Activated CD8-positive, alpha-beta memory T cell treated with anti-CD3 and anti-CD28 coated beads, Interleukin-2, amount 10 ng/mL, durations not matched to agents 7 days and 5 days (primary cell): ENCODE measurements at regions of chr2 and their contacts with region 1.

Region 1: GRCh38 chr2:42169100-42169873 is at the start of gene EML4:
- DNase-seq: peak; percentile 93
- ATAC-seq: peak; percentile 88
- H3K4me3 Mint-ChIP-seq: no peak within 1 kb of the TSS
- H3K27ac Mint-ChIP-seq: no peak within 1 kb of the TSS
- H3K4me1 Mint-ChIP-seq: peaks cover 23% of the 10 kb centered on the region
- H3K27me3 Mint-ChIP-seq: no peaks in the 10 kb centered on the region
- total RNA-seq, gene EML4: 73.4 to 110 TPM

Region 2: DNA sequence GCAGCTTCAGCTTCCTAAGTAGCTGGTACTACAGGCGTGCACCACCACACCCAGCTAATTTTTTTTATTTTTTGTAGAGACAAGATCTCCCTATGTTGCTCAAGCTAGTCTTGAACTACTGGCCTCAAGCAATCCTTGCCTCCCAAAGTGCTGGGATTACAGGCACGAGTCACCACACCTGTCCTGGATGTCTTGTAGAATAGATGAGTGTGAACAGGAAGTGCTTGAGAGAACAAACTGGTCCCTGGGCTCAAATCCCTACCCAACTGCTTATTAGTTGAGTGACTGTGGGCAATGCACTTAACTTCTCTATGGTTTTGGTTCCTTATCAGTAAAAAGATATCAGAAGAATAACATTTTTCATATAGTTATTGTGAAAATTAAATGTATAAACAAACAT is 87.3 kb before region 1 on chr2:
- CTCF ChIA-PET with region 1: no interaction called
- DNase-seq: no peak
- ATAC-seq: no peak
- H3K4me3 Mint-ChIP-seq: no peak overlapping the region
- H3K27ac Mint-ChIP-seq: no peak overlapping the region
- H3K4me1 Mint-ChIP-seq: peaks cover 10% of the 10 kb centered on the region
- H3K27me3 Mint-ChIP-seq: peaks cover 28% of the 10 kb centered on the region

Region 3: DNA sequence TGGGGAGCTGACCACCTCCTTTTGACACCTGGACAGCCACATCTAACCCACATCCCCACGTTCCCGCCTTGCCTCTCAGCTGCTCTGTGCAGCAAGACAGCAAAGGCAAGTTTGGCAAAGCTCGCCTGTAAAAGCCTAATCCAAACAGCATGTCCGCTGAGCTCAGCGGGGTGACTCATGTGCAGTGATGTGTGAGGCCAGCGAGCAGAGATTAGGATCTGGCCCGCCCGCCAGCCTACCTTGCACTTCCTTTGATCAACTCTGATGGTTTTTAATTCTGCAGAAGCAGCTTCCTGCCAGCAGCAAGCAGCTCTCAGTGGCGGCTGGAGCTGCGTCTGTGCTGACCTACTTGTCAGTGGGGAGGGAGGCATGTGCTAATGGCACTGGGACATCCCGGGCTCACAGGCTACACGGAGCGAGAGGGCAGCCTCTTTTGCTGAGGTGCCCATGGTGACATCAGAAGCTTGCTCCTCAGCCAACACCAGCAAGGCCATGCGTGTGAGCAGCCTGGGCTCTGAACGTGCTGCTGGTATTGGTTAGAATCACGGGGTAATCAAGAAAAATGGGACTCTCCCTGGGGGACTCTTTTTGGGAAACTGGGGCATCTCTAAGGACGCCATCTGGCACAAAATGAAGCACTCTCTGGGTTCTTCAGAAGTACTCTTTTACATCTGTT is 36.2 kb before region 1 on chr2:
- CTCF ChIA-PET with region 1: interaction called, 15 read pairs
- DNase-seq: peak; percentile 98
- ATAC-seq: peak; percentile 95
- H3K4me3 Mint-ChIP-seq: peak overlapping the region; percentile 61
- H3K27ac Mint-ChIP-seq: peak overlapping the region; percentile 98
- H3K4me1 Mint-ChIP-seq: peaks cover 80% of the 10 kb centered on the region
- H3K27me3 Mint-ChIP-seq: no peaks in the 10 kb centered on the region

Region 4: DNA sequence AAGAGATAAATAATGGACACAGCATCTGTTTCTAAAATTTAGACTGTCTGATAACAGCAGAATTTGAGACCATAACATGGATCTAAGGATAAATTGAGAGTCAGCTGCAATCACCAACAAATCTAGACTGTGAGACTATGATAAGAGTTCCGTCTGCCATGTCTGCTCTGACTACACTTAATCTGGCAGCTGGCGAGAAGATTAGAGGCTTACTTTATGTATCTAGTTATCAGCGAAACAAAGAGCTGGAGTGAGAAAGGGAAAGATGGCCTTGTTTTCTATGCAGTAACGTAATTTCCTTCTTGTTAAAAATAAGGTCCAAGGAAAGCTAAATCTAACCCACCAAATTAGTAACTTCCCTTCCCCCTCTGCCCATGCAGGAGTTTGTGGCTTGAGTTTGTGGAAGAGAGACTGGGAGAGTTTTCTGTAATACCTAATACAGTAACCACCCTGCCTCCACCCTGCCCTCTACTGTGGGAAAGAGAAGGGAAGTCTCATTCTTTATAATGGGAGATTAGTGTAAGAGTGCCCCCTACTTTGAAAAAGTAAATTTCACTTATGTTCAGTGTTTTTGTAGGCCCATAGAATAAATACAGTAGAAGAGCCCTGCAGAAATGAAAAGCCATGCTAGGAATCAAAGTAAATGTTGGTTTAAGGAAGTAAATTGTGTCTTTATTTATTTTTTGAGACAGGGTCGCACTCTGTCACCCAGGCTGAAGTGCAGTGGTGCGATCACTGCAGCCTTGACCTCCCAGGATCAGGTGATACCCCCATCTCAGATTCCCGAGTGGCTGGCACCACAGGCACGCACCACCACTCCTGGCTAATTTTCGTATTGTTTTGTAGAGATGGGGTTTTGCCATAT is 27.3 kb after region 1 on chr2:
- CTCF ChIA-PET with region 1: interaction called, 13 read pairs
- DNase-seq: peak; percentile 52
- ATAC-seq: peak; percentile 80
- H3K4me3 Mint-ChIP-seq: no peak overlapping the region
- H3K27ac Mint-ChIP-seq: no peak overlapping the region
- H3K4me1 Mint-ChIP-seq: peaks cover 47% of the 10 kb centered on the region
- H3K27me3 Mint-ChIP-seq: no peaks in the 10 kb centered on the region

Region 5: DNA sequence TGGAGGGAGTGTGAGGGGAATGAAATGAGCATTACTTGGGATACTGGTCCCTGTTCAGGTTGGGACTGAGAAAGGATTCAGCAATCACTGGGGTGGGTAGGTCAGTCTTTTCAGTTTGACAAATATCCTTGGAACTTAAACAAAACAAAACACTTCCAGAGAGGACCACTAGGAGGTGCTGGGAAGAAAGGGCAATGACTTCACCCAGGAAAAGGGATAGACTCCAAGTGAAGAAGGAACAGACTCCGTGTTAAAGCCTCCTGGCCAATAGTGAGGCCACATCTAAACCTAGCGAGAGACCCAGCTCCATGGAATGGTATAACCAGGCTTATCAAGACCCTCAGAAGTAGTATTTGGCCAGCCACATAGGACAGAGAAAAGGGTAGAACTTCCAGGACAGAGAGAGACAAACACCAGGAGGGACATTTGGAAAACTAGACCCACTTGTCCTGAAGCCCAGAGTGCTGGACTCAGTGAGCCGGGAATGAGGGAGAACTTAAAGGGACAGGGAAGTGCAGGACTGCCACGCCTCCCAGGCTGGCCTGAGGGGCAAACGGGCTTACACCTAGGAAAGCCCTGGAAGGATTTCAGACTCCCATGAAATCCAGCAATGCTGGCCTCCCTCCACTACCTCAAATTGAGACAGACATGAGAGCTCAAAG is 344.1 kb after region 1 on chr2:
- CTCF ChIA-PET with region 1: no interaction called
- DNase-seq: no peak
- ATAC-seq: no peak
- H3K4me3 Mint-ChIP-seq: no peak overlapping the region
- H3K27ac Mint-ChIP-seq: no peak overlapping the region
- H3K4me1 Mint-ChIP-seq: peaks cover 8% of the 10 kb centered on the region
- H3K27me3 Mint-ChIP-seq: peaks cover 3% of the 10 kb centered on the region